A673 (cell line): ENCODE measurements at regions of chr5 and their contacts with region 1.

Region 1: GRCh38 chr5:170225326-170226128 is 7.3 kb upstream of the C5orf58 start:
- DNase-seq: peak; percentile 78
- H3K4me3 ChIP-seq: no peak overlapping the region
- H3K27ac ChIP-seq: no peak overlapping the region
- H3K4me1 ChIP-seq: peaks cover 41% of the 10 kb centered on the region
- H3K27me3 ChIP-seq: no peaks in the 10 kb centered on the region
- CTCF ChIP-seq: peak; percentile 77

Region 2: GRCh38 chr5:170353011-170353761 is 127.7 kb after region 1 on chr5:
- CTCF ChIA-PET with region 1: no interaction called
- POLR2A ChIA-PET with region 1: no interaction called
- intact Hi-C with region 1: loop called (anchors 5 kb)
- DNase-seq: peak; percentile 88
- H3K4me3 ChIP-seq: peak overlapping the region; percentile 48
- H3K27ac ChIP-seq: peak overlapping the region; percentile 66
- H3K4me1 ChIP-seq: peaks cover 23% of the 10 kb centered on the region
- H3K27me3 ChIP-seq: no peaks in the 10 kb centered on the region
- CTCF ChIP-seq: no peak

Region 3: GRCh38 chr5:170420780-170421412 is 195.4 kb after region 1 on chr5:
- CTCF ChIA-PET with region 1: interaction called, 4 read pairs
- POLR2A ChIA-PET with region 1: no interaction called
- intact Hi-C with region 1: loop called (anchors 1 kb)
- DNase-seq: peak; percentile 66
- H3K4me3 ChIP-seq: no peak overlapping the region
- H3K27ac ChIP-seq: no peak overlapping the region
- H3K4me1 ChIP-seq: no peaks in the 10 kb centered on the region
- H3K27me3 ChIP-seq: no peaks in the 10 kb centered on the region
- CTCF ChIP-seq: peak; percentile 75